ENCODE measurements at regions of chr6 and their contacts with region 1.

Region 1: GRCh38 chr6:136289579-136290409 is at the start of gene BCLAF1:
- DNase-seq: peak; percentile 99 to 100 (median 99)
- ATAC-seq: peak; percentile 70
- H3K4me3 ChIP-seq: peak within 1 kb of the TSS; percentile 88
- H3K4me3 Mint-ChIP-seq: peak within 1 kb of the TSS; percentile 97
- H3K27ac ChIP-seq: peak within 1 kb of the TSS; percentile 100
- H3K27ac Mint-ChIP-seq: peak within 1 kb of the TSS; percentile 99
- H3K4me1 ChIP-seq: peaks cover 52% of the 10 kb centered on the region
- H3K4me1 Mint-ChIP-seq: peaks cover 47% of the 10 kb centered on the region
- H3K27me3 ChIP-seq: no peaks in the 10 kb centered on the region
- H3K27me3 Mint-ChIP-seq: peaks cover 3% of the 10 kb centered on the region
- CTCF ChIP-seq: peak; percentile 7
- total RNA-seq, gene BCLAF1: 484 to 501 TPM

Region 2: DNA sequence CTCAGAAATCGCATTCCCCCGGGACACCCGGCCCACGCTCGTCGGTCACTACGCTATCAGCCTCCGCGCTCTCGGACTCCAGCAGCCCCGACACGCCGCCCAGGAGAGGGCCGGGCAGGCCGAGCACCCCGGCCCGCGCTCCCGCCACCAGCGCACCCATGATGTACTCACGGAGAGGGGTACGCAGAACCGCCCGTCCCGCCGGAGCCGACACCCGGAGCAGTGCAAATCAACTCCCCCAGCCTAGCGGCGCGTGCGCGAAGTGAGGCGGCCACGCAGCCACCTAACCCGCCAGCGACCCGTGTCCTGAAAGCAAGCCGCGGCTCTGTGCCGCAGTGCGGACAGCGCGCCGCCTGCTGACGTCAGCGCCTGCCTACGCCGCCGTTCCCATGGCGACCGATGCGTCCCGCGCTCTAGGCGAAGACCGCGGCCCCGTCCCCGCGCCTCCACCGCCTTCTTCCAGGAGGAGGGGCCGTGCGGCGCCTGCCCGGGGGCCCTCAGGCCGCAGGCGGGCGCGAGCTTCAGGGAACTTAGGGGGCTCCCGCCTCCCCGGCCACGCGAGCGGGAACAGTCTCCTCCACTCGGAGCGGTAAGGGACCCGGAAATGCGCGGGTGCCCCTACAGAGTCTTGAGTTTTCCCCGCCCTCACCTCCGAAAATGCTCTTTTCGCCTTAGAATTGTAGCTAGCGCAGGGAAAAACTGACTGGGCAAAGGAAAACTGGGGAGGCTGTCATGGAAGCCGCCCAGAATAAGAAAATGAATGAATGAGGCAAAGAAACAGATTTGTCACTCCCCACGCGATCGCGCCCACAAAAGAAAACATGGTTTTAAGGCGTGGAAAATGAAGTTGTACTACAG is 792.2 kb before region 1 on chr6 and contains the start of gene AHI1:
- CTCF ChIA-PET with region 1: interaction called, 5 read pairs
- POLR2A ChIA-PET with region 1: interaction called, 69 read pairs
- intact Hi-C with region 1: loop called (anchors 2 to 5 kb)
- DNase-seq: peak; percentile 72 to 96 (median 86)
- ATAC-seq: peak; percentile 71
- H3K4me3 ChIP-seq: peak within 1 kb of the TSS; percentile 92
- H3K4me3 Mint-ChIP-seq: no peak within 1 kb of the TSS
- H3K27ac ChIP-seq: peak within 1 kb of the TSS; percentile 79 to 88
- H3K27ac Mint-ChIP-seq: no peak within 1 kb of the TSS
- H3K4me1 ChIP-seq: peaks cover 9% of the 10 kb centered on the region
- H3K4me1 Mint-ChIP-seq: peaks cover 12% of the 10 kb centered on the region
- H3K27me3 ChIP-seq: no peaks in the 10 kb centered on the region
- H3K27me3 Mint-ChIP-seq: no peaks in the 10 kb centered on the region
- CTCF ChIP-seq: no peak
- total RNA-seq, gene AHI1: 21.1 to 27.5 TPM

Region 3: DNA sequence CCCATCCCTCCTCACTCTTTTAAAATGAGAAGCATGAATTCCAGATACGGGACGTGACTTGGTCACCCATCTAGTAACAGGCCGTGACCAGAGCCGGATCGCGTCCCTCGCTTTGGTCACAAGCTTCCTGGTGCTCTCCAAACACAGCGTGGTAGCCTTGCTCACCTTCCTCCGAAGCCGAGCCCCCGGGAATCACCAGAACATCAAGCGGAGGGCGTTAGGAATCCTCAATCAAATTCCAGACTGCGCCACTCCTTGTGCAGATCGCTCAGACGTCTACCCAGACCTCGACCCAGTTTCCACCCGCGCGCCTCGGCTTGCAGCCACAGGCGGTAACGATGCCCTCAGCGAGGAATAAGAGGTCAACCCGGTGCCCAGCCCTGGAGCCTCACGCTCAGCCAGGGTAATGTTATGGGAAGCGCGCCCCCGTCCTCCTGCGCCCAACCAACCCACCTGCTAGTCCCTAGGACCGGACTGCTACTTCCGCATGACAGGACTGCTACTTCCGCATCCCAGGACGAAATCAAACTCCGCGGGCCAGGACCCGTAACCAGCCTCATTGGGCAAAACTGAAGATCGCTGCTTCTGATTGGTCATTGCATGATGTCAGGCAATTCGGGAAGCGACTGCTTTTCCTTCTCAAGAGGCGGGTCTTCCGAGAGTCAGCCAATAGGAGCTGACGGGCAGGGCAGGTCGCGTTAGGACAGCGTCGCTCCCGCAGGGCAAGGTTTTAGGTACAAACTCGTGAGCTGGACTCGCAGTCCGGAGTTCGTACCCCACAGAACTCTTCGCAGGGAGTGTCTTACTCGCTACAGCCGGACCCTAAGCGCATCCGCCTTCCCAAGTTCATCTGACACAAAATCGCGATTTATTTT is 39.7 kb before region 1 on chr6 and contains the start of gene MTFR2:
- CTCF ChIA-PET with region 1: interaction called, 5 read pairs
- POLR2A ChIA-PET with region 1: interaction called, 208 read pairs
- intact Hi-C with region 1: loop called (anchors 1 to 2 kb)
- DNase-seq: peak; percentile 80 to 99 (median 87)
- ATAC-seq: peak; percentile 95
- H3K4me3 ChIP-seq: peak within 1 kb of the TSS; percentile 79
- H3K4me3 Mint-ChIP-seq: peak within 1 kb of the TSS; percentile 95
- H3K27ac ChIP-seq: no peak within 1 kb of the TSS
- H3K27ac Mint-ChIP-seq: peak within 1 kb of the TSS; percentile 54
- H3K4me1 ChIP-seq: peaks cover 20% of the 10 kb centered on the region
- H3K4me1 Mint-ChIP-seq: peaks cover 39% of the 10 kb centered on the region
- H3K27me3 ChIP-seq: no peaks in the 10 kb centered on the region
- H3K27me3 Mint-ChIP-seq: no peaks in the 10 kb centered on the region
- CTCF ChIP-seq: no peak
- total RNA-seq, gene MTFR2: 1.1 to 1.2 TPM

Region 4: DNA sequence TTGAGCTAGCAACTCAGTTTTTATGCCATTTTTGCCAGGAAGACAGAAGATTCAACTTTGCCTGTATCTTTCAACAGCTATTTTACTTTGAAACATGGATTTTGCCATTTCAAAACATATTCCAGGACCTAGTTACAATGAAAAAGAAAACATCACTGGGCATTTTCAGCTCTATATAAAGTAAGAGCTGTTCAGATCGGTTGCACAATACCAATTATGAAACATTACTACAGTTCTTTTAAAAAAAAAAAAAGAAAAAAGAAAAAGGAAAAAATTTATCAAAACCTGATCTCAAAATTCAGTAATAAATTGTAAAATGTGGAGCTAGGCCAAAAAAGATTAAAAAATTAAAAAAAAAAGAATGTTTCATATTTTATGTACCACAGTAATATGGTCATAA is 15.7 kb before region 1 on chr6:
- CTCF ChIA-PET with region 1: no interaction called
- POLR2A ChIA-PET with region 1: interaction called, 22 read pairs
- intact Hi-C with region 1: loop called in 1 of 2 experiments (anchors 2 kb)
- DNase-seq: no peak
- ATAC-seq: no peak
- H3K4me3 ChIP-seq: no peak overlapping the region
- H3K4me3 Mint-ChIP-seq: no peak overlapping the region
- H3K27ac ChIP-seq: no peak overlapping the region
- H3K27ac Mint-ChIP-seq: no peak overlapping the region
- H3K4me1 ChIP-seq: no peaks in the 10 kb centered on the region
- H3K4me1 Mint-ChIP-seq: peaks cover 62% of the 10 kb centered on the region
- H3K27me3 ChIP-seq: no peaks in the 10 kb centered on the region
- H3K27me3 Mint-ChIP-seq: no peaks in the 10 kb centered on the region
- CTCF ChIP-seq: no peak

Region 5: DNA sequence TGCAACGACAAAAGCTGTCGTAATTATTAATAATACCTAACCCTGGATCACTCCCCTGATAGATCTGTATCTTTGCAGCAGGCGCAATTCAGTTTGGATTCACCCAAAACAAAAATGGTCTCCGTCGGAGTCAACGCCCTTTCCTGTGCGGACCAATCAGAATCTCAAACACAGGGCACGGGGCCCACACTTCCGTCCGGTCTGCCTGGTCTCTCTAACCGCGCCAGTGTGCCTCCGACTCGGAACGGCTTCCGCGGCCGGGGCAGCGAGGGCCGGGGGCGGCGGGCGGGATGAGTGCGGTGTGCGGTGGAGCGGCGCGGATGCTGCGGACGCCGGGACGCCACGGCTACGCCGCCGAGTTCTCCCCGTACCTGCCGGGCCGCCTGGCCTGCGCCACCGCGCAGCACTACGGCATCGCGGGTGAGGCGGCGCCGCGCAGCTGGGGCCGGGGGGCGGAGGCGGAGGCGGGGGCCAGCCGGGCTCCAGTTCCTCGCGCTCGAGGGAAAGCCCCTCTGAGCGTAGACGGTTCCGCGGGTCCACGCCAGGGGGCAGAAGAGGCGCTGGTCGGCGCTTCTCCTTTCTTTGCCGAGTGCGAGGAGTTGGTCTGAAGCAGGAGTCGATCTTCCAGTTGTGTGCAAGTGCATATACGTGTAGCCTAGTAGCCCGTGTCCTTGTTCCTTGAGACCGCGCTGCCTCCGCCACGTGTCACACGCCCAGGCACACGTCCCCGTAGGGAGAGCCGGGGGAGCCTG is 532.8 kb after region 1 on chr6 and contains the start of gene PEX7:
- CTCF ChIA-PET with region 1: no interaction called
- POLR2A ChIA-PET with region 1: interaction called, 19 read pairs
- intact Hi-C with region 1: loop called in 1 of 2 experiments (anchors 10 kb)
- DNase-seq: peak; percentile 71 to 95 (median 82)
- ATAC-seq: peak; percentile 90
- H3K4me3 ChIP-seq: peak within 1 kb of the TSS; percentile 73
- H3K4me3 Mint-ChIP-seq: peak within 1 kb of the TSS; percentile 95
- H3K27ac ChIP-seq: peak within 1 kb of the TSS; percentile 32 to 77
- H3K27ac Mint-ChIP-seq: peak within 1 kb of the TSS; percentile 90
- H3K4me1 ChIP-seq: peaks cover 12% of the 10 kb centered on the region
- H3K4me1 Mint-ChIP-seq: peaks cover 45% of the 10 kb centered on the region
- H3K27me3 ChIP-seq: no peaks in the 10 kb centered on the region
- H3K27me3 Mint-ChIP-seq: peaks cover 5% of the 10 kb centered on the region
- CTCF ChIP-seq: peak; percentile 66
- total RNA-seq, gene PEX7: 2.0 to 3.4 TPM